Esophagus squamous epithelium (tissue), 5 donors: ENCODE measurements at regions of chr5 and their contacts with region 1.

Region 1: GRCh38 chr5:140639148-140639979 is at the start of gene TMCO6:
- DNase-seq: peak; percentile 90
- H3K4me3 ChIP-seq: peak within 1 kb of the TSS; percentile 76 to 89 (median 85)
- H3K27ac ChIP-seq: peak within 1 kb of the TSS; percentile 93 to 96 (median 95)
- H3K4me1 ChIP-seq: peaks cover 11 to 50% (median 12%) of the 10 kb centered on the region in 3 donors
- H3K27me3 ChIP-seq: no peaks in the 10 kb centered on the region
- CTCF ChIP-seq: peak; percentile 35 to 67 (median 50)
- POLR2A ChIP-seq: peak in 3 of 4 donors; percentile 23 to 80 (median 40)
- total RNA-seq, gene TMCO6: 18.4 to 46.7 (median 28.2) TPM

Region 2: DNA sequence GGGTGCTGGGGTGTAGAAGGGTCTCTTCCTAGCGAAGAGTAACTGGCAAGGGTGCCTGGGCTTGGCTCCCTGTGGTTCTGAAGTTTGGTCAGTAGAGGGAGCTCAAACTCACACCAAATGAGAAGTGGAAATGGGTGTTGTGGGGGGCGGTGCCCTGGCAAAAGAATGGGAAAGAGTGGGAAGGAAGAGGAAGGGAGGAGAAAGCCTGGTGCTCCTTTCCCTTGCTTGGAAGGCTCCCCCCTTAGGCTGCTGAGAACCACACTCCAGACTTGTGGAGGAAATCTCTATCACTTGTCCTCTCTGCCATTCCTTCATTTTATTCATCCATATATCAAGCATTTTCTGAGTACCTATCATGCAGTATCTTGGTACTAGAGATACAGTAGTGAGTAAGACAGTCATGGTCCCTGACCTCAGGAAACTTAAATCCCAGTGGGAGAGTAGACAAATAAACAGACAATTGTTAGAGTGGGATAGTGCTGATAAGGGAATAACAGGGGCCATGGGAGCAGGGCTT is 266.3 kb before region 1 on chr5:
- intact Hi-C with region 1: loop called (anchors 10 kb)
- DNase-seq: no peak
- H3K4me3 ChIP-seq: no peak overlapping the region
- H3K27ac ChIP-seq: peak overlapping the region in 1 of 4 donors; percentile 25
- H3K4me1 ChIP-seq: peaks cover 4 to 26% (median 8%) of the 10 kb centered on the region in 3 donors
- H3K27me3 ChIP-seq: no peaks in the 10 kb centered on the region
- CTCF ChIP-seq: peak; percentile 67 to 86 (median 74)
- POLR2A ChIP-seq: no peak

Region 3: DNA sequence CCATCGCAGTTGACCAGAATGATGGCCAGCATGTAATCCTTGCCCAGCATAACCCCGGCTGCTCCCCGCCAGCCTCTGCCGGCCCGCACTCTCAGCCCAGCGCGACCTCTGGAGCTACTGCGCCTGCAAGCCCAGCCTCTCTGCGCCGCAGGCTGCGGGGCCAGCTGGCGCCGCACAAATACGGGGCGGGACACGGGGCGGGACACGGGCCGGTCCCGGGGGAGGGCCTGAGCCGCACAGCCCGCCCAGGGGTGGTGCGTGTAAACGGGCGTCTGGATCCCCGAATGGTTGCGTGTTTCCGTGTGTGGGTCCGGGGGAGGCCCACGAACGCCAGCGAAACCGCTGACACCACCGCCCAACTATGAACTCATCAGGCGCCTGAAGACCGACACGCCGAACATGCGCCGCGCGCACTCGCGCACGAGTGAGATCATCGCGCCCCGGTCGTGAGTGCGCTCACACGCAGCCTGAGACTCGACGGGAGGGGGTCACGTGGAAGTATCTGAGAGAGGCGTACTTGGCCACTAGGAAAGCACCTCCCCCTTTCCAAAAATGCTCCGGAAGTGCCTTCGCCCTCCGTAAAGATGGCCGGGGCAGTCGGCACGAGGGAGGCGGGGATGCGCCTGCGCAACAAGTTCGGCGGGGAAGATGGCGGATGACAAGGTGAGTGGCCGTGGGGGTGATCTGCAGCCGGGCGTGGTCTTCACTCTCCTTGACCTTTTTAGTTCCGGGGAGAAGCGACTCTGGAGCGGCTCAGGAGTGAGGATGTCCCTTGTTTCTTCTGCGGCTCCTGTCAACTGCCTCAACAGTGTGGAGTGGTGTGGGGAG is 75.0 kb before region 1 on chr5 and contains the starts of genes APBB3 and SLC35A4:
- intact Hi-C with region 1: loop called (anchors 5 kb)
- DNase-seq: peak; percentile 95
- H3K4me3 ChIP-seq: peak within 1 kb of the TSS; percentile 62 to 91 (median 78)
- H3K27ac ChIP-seq: peak within 1 kb of the TSS; percentile 93 to 97 (median 94)
- H3K4me1 ChIP-seq: peaks cover 16 to 72% (median 48%) of the 10 kb centered on the region in 3 donors
- H3K27me3 ChIP-seq: no peaks in the 10 kb centered on the region
- CTCF ChIP-seq: peak in 1 of 6 experiments; percentile 19
- POLR2A ChIP-seq: peak in 3 of 4 donors; percentile 83 to 86 (median 84)
- total RNA-seq, gene APBB3: 3.4 to 10.5 (median 6.5) TPM
- total RNA-seq, gene SLC35A4: 41.4 to 56.9 (median 52.6) TPM